Activated CD4-positive, alpha-beta T cell treated with anti-CD3 and anti-CD28 coated beads, Interleukin-2, amount 10 ng/mL, durations not matched to agents 24 days and 14 days (primary cell): ENCODE measurements at regions of chr18 and their contacts with region 1.

Region 1: GRCh38 chr18:63994783-63995399 is 25.0 kb downstream of the SERPINB8 start:
- DNase-seq: peak; percentile 79
- H3K4me3 Mint-ChIP-seq: no peak overlapping the region
- H3K27ac Mint-ChIP-seq: no peak overlapping the region
- H3K4me1 Mint-ChIP-seq: no peaks in the 10 kb centered on the region
- H3K27me3 Mint-ChIP-seq: no peaks in the 10 kb centered on the region

Region 2: DNA sequence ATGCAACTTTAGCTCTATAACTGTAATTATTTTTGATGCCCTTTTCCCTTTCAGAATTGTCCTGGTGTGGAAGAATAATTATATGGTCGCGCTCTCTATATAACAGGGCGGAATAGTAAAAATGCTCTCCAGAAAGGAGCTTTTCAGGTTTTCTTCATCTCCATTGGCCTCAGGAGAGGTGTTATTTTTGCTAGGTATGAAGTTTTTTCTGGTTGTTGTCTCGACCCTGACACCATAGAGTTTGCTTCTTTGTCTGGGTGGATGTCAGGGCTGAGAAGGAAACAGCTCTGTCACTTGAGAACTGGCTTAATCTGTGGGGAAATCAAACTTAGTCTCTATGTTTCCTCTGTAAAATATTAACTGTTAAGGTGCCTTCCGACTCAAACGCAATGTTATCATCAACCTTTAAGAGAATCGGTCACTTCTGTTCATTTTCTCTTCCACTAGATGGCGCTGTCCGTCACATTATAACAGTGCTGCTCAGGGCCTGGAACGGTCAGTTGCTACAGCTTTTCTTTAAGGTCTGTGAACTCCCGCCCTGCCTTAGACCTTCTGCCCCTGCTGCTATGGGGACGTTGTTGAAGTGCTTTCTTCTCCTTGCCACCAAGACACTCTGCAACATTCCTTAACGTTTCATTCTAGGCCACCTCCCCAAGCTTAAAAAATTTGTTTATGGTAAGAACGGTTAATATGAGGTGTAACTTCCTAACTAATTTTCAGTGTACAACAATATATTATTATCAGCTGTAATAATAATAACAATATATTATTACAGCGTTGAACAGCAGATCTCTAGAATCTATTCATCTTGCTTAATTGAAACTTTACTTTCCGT is 476.5 kb before region 1 on chr18:
- intact Hi-C with region 1: loop called (anchors 5 kb)
- DNase-seq: peak; percentile 88
- H3K4me3 Mint-ChIP-seq: no peak overlapping the region
- H3K27ac Mint-ChIP-seq: no peak overlapping the region
- H3K4me1 Mint-ChIP-seq: no peaks in the 10 kb centered on the region
- H3K27me3 Mint-ChIP-seq: peaks cover 34% of the 10 kb centered on the region

Region 3: GRCh38 chr18:63890950-63891304 is 104.0 kb before region 1 on chr18:
- intact Hi-C with region 1: loop called (anchors 5 kb)
- DNase-seq: no peak
- H3K4me3 Mint-ChIP-seq: no peak overlapping the region
- H3K27ac Mint-ChIP-seq: no peak overlapping the region
- H3K4me1 Mint-ChIP-seq: peaks cover 6% of the 10 kb centered on the region
- H3K27me3 Mint-ChIP-seq: peaks cover 16% of the 10 kb centered on the region

Region 4: GRCh38 chr18:63963615-63964256 is 31.2 kb before region 1 on chr18:
- intact Hi-C with region 1: loop called (anchors 1 kb)
- DNase-seq: peak; percentile 81
- H3K4me3 Mint-ChIP-seq: no peak overlapping the region
- H3K27ac Mint-ChIP-seq: no peak overlapping the region
- H3K4me1 Mint-ChIP-seq: peaks cover 16% of the 10 kb centered on the region
- H3K27me3 Mint-ChIP-seq: no peaks in the 10 kb centered on the region

Region 5: GRCh38 chr18:63969960-63970802 is 24.7 kb before region 1 on chr18 and contains the start of gene SERPINB8:
- intact Hi-C with region 1: loop called (anchors 2 kb)
- DNase-seq: peak; percentile 94
- H3K4me3 Mint-ChIP-seq: peak within 1 kb of the TSS; percentile 93
- H3K27ac Mint-ChIP-seq: peak within 1 kb of the TSS; percentile 92
- H3K4me1 Mint-ChIP-seq: peaks cover 35% of the 10 kb centered on the region
- H3K27me3 Mint-ChIP-seq: no peaks in the 10 kb centered on the region
- total RNA-seq, gene SERPINB8: 22.0 and 25.5 TPM in 2 replicates

Region 6: GRCh38 chr18:64027931-64028695 is 33.2 kb after region 1 on chr18:
- intact Hi-C with region 1: no loop called
- DNase-seq: no peak
- H3K4me3 Mint-ChIP-seq: no peak overlapping the region
- H3K27ac Mint-ChIP-seq: no peak overlapping the region
- H3K4me1 Mint-ChIP-seq: peaks cover 1% of the 10 kb centered on the region
- H3K27me3 Mint-ChIP-seq: peaks cover 2% of the 10 kb centered on the region

Region 7: GRCh38 chr18:64082054-64082453 is 87.2 kb after region 1 on chr18:
- intact Hi-C with region 1: no loop called
- DNase-seq: no peak
- H3K4me3 Mint-ChIP-seq: no peak overlapping the region
- H3K27ac Mint-ChIP-seq: no peak overlapping the region
- H3K4me1 Mint-ChIP-seq: no peaks in the 10 kb centered on the region
- H3K27me3 Mint-ChIP-seq: no peaks in the 10 kb centered on the region